MCF 10A (cell line): ENCODE measurements at regions of chr1 and their contacts with region 1.

Region 1: GRCh38 chr1:216531263-216532239 is 108.3 kb upstream of the USH2A start:
- DNase-seq: no peak
- H3K4me3 Mint-ChIP-seq: peak overlapping the region; percentile 37
- H3K27ac Mint-ChIP-seq: no peak overlapping the region
- H3K4me1 Mint-ChIP-seq: peaks cover 7% of the 10 kb centered on the region
- H3K27me3 Mint-ChIP-seq: peaks cover 51% of the 10 kb centered on the region
- CTCF ChIP-seq: no peak

Region 2: DNA sequence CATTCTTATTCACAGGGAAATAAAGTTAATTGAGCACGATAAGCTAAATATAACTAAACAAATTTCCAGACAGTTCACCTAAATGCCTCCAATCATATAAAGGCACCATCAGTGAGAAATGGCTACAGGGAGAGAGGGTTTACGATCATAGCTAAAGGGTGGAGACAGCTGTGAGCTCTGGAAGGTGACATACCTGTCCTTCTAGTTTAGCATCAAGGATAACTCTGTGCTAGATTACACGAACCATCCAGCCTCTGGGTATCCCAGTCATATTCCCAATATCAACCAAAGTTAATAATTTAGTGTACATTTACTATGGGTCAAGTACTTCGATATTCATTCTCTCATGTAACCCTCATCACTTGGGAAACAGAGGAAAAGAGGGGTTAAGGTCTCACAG is 139.7 kb after region 1 on chr1:
- CTCF ChIA-PET with region 1: no interaction called
- POLR2A ChIA-PET with region 1: no interaction called
- intact Hi-C with region 1: no loop called
- DNase-seq: no peak
- H3K4me3 Mint-ChIP-seq: no peak overlapping the region
- H3K27ac Mint-ChIP-seq: no peak overlapping the region
- H3K4me1 Mint-ChIP-seq: peaks cover 4% of the 10 kb centered on the region
- H3K27me3 Mint-ChIP-seq: no peaks in the 10 kb centered on the region
- CTCF ChIP-seq: no peak

Region 3: DNA sequence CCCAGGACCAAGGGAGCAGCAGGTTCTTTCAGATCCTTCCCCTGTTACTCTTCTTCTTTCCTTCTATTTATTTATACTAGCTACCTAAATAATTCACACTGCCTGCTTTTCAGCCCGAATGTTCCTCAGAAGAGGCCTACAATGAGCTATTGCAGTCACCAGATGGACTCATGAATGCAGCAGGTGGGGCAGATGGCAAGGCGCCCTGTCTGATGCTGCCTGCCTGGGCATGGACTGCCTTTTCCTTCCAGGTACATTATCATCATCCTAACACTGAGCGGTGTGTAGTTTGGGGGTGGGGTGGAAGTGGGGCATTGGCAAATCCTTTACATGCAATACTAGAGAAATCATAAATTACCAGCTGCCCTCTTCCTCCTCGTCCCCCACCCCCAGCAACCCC is 174.1 kb after region 1 on chr1:
- CTCF ChIA-PET with region 1: no interaction called
- POLR2A ChIA-PET with region 1: no interaction called
- intact Hi-C with region 1: loop called (anchors 5 kb)
- DNase-seq: no peak
- H3K4me3 Mint-ChIP-seq: no peak overlapping the region
- H3K27ac Mint-ChIP-seq: no peak overlapping the region
- H3K4me1 Mint-ChIP-seq: no peaks in the 10 kb centered on the region
- H3K27me3 Mint-ChIP-seq: peaks cover 95% of the 10 kb centered on the region
- CTCF ChIP-seq: no peak